Transverse colon (tissue), 4 donors: ENCODE measurements at regions of chr7 and their contacts with region 1.

Region 1: DNA sequence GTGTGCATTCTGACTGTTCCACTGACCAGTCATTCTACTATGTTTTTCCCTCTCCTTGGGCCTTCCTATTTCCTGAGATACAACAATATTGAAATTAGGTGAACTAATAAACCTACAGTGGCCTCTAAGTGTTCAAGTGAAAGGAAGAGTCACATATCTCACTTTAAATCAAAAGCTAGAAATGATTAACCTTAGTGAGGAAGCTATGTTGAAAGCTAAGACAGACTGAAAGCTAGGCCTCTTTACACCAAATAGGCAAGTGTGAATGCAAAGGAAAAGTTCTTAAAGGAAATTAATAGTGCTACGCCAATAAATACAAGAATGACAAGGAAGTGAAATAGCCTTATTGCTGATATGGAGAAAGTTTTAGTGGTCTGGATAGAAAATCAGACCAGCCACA is 5.7 kb upstream of the DYNC1I1 start:
- DNase-seq: no peak
- H3K4me3 ChIP-seq: no peak overlapping the region
- H3K27ac ChIP-seq: no peak overlapping the region
- H3K4me1 ChIP-seq: no peaks in the 10 kb centered on the region
- H3K27me3 ChIP-seq: no peaks in the 10 kb centered on the region
- CTCF ChIP-seq: no peak
- EP300 ChIP-seq: no peak
- POLR2A ChIP-seq: no peak

Region 2: GRCh38 chr7:95066736-95067530 is 699.7 kb before region 1 on chr7:
- in situ Hi-C with region 1: no loop called
- intact Hi-C with region 1: loop called (anchors 5 kb)
- DNase-seq: no peak
- H3K4me3 ChIP-seq: no peak overlapping the region
- H3K27ac ChIP-seq: peak overlapping the region in 1 of 4 donors; percentile 9
- H3K4me1 ChIP-seq: peaks cover 0 to 18% (median 0%) of the 10 kb centered on the region in 4 donors
- H3K27me3 ChIP-seq: no peaks in the 10 kb centered on the region
- CTCF ChIP-seq: no peak
- EP300 ChIP-seq: no peak
- POLR2A ChIP-seq: no peak

Region 3: GRCh38 chr7:96670338-96671289 is 904.0 kb after region 1 on chr7:
- in situ Hi-C with region 1: no loop called
- intact Hi-C with region 1: no loop called
- DNase-seq: no peak
- H3K4me3 ChIP-seq: no peak overlapping the region
- H3K27ac ChIP-seq: peak overlapping the region in 1 of 4 donors; percentile 0
- H3K4me1 ChIP-seq: no peaks in the 10 kb centered on the region
- H3K27me3 ChIP-seq: no peaks in the 10 kb centered on the region
- CTCF ChIP-seq: no peak
- EP300 ChIP-seq: no peak
- POLR2A ChIP-seq: no peak